ENCODE measurements at regions of chr6 and their contacts with region 1.

Region 1: GRCh38 chr6:63598049-63599036 is 26.1 kb downstream of the LOC128125822 start:
- DNase-seq: peak; percentile 88
- ATAC-seq: peak; percentile 99
- H3K4me3 ChIP-seq: peak overlapping the region; percentile 70 to 80 (median 73)
- H3K27ac ChIP-seq: peak overlapping the region; percentile 26
- H3K4me1 ChIP-seq: peaks cover 20% of the 10 kb centered on the region
- H3K27me3 ChIP-seq: no peaks in the 10 kb centered on the region; a peak in 1 of 5 replicates
- CTCF ChIP-seq: peak; percentile 98
- EP300 ChIP-seq: no peak
- POLR2A ChIP-seq: peak; percentile 46 to 60; a peak in 3 of 4 replicates
- RAD21 ChIP-seq: peak; percentile 89

Region 2: DNA sequence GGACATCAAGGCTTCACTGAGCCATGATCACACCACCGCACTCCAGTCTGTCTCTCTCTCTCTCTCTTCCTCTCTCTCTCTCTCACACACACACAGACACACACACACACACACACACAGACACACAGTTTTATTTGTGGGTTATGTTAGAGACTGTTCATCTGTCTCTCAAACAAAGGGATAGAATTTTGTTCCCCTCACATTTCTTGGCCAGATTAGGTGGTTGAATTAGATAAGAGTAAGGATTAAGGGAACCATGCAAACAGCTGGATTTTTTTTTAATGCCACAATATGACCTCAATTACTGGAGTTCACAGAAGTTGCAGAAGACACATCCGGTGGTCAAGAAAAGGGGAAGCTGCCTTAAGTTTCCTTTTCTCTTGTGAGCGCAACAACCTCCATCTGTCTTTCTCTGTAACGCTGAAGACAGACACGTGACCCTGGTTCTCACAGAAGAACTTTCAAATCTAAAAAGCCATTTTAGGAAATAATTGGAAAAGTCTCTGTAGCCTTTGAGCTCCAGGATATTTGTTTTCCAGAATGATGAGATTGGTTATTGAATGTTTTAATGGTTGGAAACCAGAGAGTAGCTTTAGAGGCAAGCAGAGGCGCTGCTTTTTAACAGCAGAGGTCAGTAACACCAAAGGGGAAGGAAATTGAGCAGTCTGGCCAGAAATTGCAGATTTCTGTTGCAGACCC is 245.6 kb before region 1 on chr6:
- CTCF ChIA-PET with region 1: no interaction called
- POLR2A ChIA-PET with region 1: interaction called, 10 read pairs
- in situ Hi-C with region 1: no loop called
- intact Hi-C with region 1: loop called (anchors 1 kb)
- DNase-seq: peak; percentile 80
- ATAC-seq: peak; percentile 97
- H3K4me3 ChIP-seq: no peak overlapping the region
- H3K27ac ChIP-seq: peak overlapping the region; percentile 49
- H3K4me1 ChIP-seq: peaks cover 49% of the 10 kb centered on the region
- H3K27me3 ChIP-seq: no peaks in the 10 kb centered on the region
- CTCF ChIP-seq: peak; percentile 97
- EP300 ChIP-seq: peak in 1 of 2 experiments; percentile 66; a peak in 2 of 4 replicates
- POLR2A ChIP-seq: no peak
- RAD21 ChIP-seq: peak; percentile 99

Region 3: DNA sequence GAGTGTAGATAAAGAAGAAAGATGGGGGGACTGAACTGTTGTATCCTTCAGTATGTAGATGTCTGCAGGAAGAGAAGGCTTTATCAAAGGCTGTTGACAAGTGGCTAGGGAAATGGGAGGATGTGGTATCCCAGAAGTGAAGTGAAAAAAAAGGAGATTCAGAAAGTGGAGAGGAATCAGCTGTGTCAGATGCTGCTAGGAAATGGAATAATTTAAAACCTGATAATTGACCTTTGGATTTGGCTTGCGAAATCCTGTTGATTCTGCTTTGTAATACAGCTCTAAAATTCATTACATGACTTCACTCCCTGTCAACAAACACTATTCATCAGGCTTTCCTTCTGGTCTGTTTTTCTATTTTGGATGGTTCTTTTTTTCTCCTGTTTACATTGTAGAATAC is 78.9 kb after region 1 on chr6:
- CTCF ChIA-PET with region 1: no interaction called
- POLR2A ChIA-PET with region 1: no interaction called
- in situ Hi-C with region 1: no loop called
- intact Hi-C with region 1: loop called (anchors 1 kb)
- DNase-seq: peak; percentile 78
- ATAC-seq: peak; percentile 66
- H3K4me3 ChIP-seq: no peak overlapping the region
- H3K27ac ChIP-seq: peak overlapping the region; percentile 20
- H3K4me1 ChIP-seq: peaks cover 47% of the 10 kb centered on the region
- H3K27me3 ChIP-seq: no peaks in the 10 kb centered on the region
- CTCF ChIP-seq: no peak
- EP300 ChIP-seq: peak in 1 of 2 experiments; percentile 59; a peak in 1 of 4 replicates
- POLR2A ChIP-seq: no peak
- RAD21 ChIP-seq: no peak

Region 4: DNA sequence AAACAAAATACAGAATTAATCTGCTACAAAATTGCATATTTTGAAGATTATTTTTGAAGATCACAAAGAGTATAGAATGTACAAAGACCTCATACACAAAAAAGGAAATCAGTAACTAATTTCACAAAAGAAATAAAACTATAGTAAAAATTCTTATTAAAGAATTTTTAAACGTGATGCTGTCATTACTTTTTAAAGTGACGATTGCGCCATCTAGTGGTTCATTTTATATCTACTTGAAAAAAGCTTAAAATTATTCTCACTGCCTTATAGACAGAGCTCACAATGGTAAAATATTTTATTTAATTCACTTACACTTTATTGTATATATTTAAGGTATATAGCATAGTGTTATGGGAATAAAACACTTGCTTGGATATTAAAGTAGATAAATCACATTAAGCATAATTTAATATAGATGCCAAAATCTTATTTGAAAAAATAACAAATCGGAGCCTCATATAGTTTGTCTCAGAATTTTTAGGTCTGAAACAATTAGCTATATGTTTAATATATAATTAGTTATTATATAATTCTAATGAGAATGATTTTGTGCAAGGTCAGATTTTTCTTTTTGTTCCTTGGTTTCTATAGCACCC is 166.1 kb after region 1 on chr6:
- CTCF ChIA-PET with region 1: interaction called, 32 read pairs
- POLR2A ChIA-PET with region 1: interaction called, 8 read pairs
- in situ Hi-C with region 1: loop called (anchors 5 kb)
- intact Hi-C with region 1: loop called (anchors 1 kb)
- DNase-seq: peak; percentile 65
- ATAC-seq: no peak
- H3K4me3 ChIP-seq: no peak overlapping the region
- H3K27ac ChIP-seq: no peak overlapping the region
- H3K4me1 ChIP-seq: no peaks in the 10 kb centered on the region
- H3K27me3 ChIP-seq: no peaks in the 10 kb centered on the region
- CTCF ChIP-seq: peak; percentile 46; the same call in 1 of the 2 replicates
- EP300 ChIP-seq: no peak
- POLR2A ChIP-seq: no peak
- RAD21 ChIP-seq: no peak

Region 5: GRCh38 chr6:63872233-63872632 is 273.9 kb after region 1 on chr6:
- CTCF ChIA-PET with region 1: no interaction called
- POLR2A ChIA-PET with region 1: no interaction called
- in situ Hi-C with region 1: no loop called
- intact Hi-C with region 1: no loop called
- DNase-seq: no peak
- ATAC-seq: peak; percentile 66
- H3K4me3 ChIP-seq: no peak overlapping the region
- H3K27ac ChIP-seq: no peak overlapping the region
- H3K4me1 ChIP-seq: no peaks in the 10 kb centered on the region
- H3K27me3 ChIP-seq: no peaks in the 10 kb centered on the region
- CTCF ChIP-seq: no peak
- EP300 ChIP-seq: no peak
- POLR2A ChIP-seq: no peak
- RAD21 ChIP-seq: no peak